Common myeloid progenitor, CD34-positive (primary cell): ENCODE measurements at regions of chr9 and their contacts with region 1.

Region 1: GRCh38 chr9:129139993-129140396 is 28.8 kb downstream of the PTPA start:
- DNase-seq: peak; percentile 88 to 96 (median 94)
- H3K4me3 ChIP-seq: peak overlapping the region in 5 of 7 experiments; percentile 31 to 70 (median 55)
- H3K27ac ChIP-seq: peak overlapping the region; percentile 89 to 96
- H3K4me1 ChIP-seq: peaks cover 4 to 50% (median 45%) of the 10 kb centered on the region in 4 experiments
- H3K27me3 ChIP-seq: no peaks in the 10 kb centered on the region

Region 2: DNA sequence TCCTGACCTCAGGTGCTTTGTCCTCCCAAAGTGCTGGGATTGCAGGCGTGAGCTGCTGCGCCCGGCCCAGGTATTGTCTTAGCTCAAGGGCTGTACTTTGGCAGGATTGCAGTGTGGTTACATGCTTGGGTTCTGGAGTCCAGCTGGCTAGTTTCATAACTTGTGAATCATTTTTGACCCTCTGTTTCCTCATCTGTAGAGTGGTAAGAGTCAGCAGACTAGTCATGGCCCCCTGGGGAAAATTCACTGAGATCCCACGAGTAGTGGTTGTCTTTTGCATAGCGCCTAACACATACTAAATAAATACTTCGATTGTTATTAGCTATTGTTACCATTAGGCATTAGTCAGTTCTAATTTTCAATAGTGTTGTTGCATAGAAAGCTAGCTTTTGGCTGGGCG is 14.5 kb before region 1 on chr9:
- CTCF ChIA-PET with region 1: interaction called, 17 read pairs
- POLR2A ChIA-PET with region 1: no interaction called
- DNase-seq: no peak
- H3K4me3 ChIP-seq: no peak overlapping the region
- H3K27ac ChIP-seq: no peak overlapping the region
- H3K4me1 ChIP-seq: peaks cover 0 to 13% (median 7%) of the 10 kb centered on the region in 4 experiments
- H3K27me3 ChIP-seq: no peaks in the 10 kb centered on the region

Region 3: GRCh38 chr9:129160712-129161533 is 20.9 kb after region 1 on chr9:
- CTCF ChIA-PET with region 1: interaction called, 18 read pairs
- POLR2A ChIA-PET with region 1: no interaction called
- DNase-seq: no peak
- H3K4me3 ChIP-seq: no peak overlapping the region
- H3K27ac ChIP-seq: no peak overlapping the region
- H3K4me1 ChIP-seq: peaks cover 0 to 21% (median 2%) of the 10 kb centered on the region in 4 experiments
- H3K27me3 ChIP-seq: no peaks in the 10 kb centered on the region

Region 4: DNA sequence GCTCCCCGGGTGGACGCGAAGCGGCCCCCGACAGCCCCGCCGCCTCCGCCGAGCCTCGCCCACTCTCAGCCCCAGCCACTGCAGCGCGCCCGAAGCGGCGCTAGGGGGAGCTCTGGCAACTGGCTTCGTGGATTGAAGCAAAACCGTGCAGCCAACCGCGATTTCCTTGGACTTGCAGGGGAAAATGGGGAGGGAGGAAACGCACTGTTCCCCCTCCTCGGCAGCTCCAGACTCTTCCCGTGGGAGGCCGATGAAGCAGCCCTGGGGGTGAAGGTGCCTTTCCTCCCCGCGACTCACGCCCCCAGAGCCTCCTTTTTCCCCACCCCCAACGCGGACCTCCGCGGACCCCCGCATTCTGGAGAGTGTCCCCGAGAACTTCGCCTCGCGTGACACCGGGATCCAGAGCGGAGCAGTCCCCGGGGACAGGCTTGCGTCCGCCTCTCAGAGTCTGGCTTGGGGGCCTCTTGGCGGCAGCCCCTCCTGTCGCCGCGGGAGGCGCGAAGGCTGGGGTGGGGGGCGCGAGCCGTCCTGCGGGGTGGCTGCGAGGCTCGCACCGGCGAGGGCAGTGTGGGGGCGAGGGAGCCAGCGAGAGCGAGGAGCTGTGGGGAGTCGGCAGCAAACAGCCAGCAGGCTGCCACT is 34.2 kb after region 1 on chr9:
- CTCF ChIA-PET with region 1: interaction called, 46 read pairs
- POLR2A ChIA-PET with region 1: interaction called, 7 read pairs
- DNase-seq: peak; percentile 74 to 82 (median 80)
- H3K4me3 ChIP-seq: peak overlapping the region; percentile 61 to 89 (median 78)
- H3K27ac ChIP-seq: peak overlapping the region in 1 of 2 experiments; percentile 81
- H3K4me1 ChIP-seq: peaks cover 2 to 61% (median 45%) of the 10 kb centered on the region in 4 experiments
- H3K27me3 ChIP-seq: no peaks in the 10 kb centered on the region

Region 5: GRCh38 chr9:129626079-129626624 is 486.2 kb after region 1 on chr9 and contains the start of gene NTMT1:
- CTCF ChIA-PET with region 1: interaction called, 57 read pairs
- POLR2A ChIA-PET with region 1: no interaction called
- DNase-seq: peak; percentile 87 to 94 (median 93)
- H3K4me3 ChIP-seq: peak within 1 kb of the TSS; percentile 66 to 89 (median 84)
- H3K27ac ChIP-seq: peak within 1 kb of the TSS; percentile 61 to 81
- H3K4me1 ChIP-seq: peaks cover 19 to 45% (median 35%) of the 10 kb centered on the region in 4 experiments
- H3K27me3 ChIP-seq: no peaks in the 10 kb centered on the region